Activated naive CD4-positive, alpha-beta T cell treated with anti-CD3 and anti-CD28 coated beads for 36 hours (primary cell): ENCODE measurements at regions of chr19 and their contacts with region 1.

Region 1: DNA sequence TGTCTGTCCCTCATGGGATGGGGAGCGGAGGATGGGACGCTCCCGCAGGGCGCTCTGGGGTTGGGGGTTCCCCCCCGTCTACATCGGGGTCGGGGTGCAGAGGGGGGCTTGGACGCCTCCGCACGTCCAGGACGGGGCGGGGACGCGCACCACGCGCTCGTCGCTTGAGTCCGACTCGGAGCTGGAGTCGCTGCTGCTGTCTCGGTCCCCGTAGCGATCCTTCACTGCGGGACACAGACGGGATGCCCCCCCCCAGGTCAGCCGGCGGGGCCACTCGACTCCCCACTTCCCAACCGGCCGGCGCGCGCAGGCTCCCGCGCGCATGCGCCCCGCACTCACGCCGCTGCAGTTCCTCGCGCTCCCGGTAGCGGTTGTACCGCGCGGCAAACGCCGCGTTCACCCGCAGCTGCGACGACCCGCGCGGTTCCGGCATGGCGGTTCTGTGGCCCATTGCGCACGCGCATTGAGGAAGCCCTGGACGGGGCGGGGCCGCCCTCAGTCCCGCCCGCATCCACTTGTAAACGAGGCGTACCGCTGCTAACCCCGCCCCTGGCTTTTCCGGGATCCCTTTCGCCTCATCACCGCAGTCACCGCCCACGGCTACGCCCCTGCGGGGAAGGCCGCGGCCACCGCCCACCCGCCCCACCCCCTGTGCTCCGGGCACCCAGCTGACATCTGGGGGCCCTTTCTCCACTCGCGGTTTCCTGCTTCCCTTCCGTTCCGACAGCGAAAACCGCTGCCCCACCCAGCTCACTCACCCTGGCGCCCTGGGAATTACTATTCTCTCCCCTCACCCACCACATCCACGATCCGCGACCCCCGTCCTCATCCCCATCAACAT is at the start of gene KRI1:
- DNase-seq: peak; percentile 99
- H3K4me3 Mint-ChIP-seq: peak within 1 kb of the TSS; percentile 94
- H3K27ac Mint-ChIP-seq: peak within 1 kb of the TSS; percentile 98
- H3K4me1 Mint-ChIP-seq: peaks cover 49% of the 10 kb centered on the region
- H3K27me3 Mint-ChIP-seq: no peaks in the 10 kb centered on the region
- total RNA-seq, gene KRI1: 50.2 to 51.7 TPM

Region 2: DNA sequence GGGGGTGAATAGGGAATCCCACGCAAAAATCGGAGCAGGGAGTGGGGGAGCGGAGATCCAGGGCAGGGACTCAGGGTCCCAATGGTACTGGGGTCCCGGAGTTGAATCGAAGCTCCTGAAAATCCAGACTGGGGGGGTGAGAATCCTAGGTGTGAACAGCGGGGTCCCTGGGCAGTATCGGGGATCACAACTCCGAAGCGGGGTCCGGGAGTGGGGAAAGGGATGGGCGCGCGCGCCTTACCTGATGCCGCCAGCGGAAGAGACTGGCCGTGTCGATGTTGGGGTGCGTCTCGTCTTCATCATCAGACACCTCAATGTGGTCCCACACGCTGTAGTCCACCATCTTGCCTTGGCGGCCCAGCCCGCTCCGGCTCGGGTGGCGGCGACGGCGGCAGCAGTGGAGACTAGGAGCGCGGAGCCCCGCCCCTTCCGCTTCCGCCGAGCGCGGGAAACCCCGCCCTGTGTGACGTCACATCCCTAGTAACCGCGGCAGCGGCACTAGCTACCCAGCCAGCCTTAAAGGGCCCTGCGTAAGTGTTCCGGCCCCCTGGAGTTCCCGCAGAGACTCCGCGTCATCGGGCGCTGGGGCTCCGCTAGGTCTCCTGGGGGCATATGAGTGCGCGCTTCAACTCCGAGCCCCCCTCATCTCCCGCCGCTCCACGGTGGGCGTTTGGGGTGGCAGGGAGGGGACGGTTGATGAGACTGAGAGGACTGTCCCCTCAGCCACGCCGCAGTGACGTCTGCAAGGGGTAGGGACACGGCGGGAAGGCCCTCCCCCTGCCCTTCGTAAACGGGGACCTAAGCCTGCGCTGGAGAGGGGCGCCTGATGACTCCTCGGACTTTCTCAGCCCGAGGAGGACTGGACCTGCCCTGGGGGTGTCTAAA is 162.4 kb before region 1 on chr19 and contains the start of gene CDC37:
- CTCF ChIA-PET with region 1: interaction called, 3 read pairs
- intact Hi-C with region 1: loop called (anchors 1 kb)
- DNase-seq: peak; percentile 98
- H3K4me3 Mint-ChIP-seq: peak within 1 kb of the TSS; percentile 91
- H3K27ac Mint-ChIP-seq: peak within 1 kb of the TSS; percentile 77
- H3K4me1 Mint-ChIP-seq: peaks cover 65% of the 10 kb centered on the region
- H3K27me3 Mint-ChIP-seq: no peaks in the 10 kb centered on the region
- total RNA-seq, gene CDC37: 158 to 164 TPM

Region 3: GRCh38 chr19:10543420-10544241 is 22.2 kb before region 1 on chr19 and contains the start of gene ATG4D:
- CTCF ChIA-PET with region 1: interaction called, 28 read pairs
- intact Hi-C with region 1: loop called (anchors 1 kb)
- DNase-seq: peak; percentile 78
- H3K4me3 Mint-ChIP-seq: peak within 1 kb of the TSS; percentile 85
- H3K27ac Mint-ChIP-seq: peak within 1 kb of the TSS; percentile 84
- H3K4me1 Mint-ChIP-seq: peaks cover 16% of the 10 kb centered on the region
- H3K27me3 Mint-ChIP-seq: peaks cover 5% of the 10 kb centered on the region
- total RNA-seq, gene ATG4D: 21.6 to 22.5 TPM

Region 4: DNA sequence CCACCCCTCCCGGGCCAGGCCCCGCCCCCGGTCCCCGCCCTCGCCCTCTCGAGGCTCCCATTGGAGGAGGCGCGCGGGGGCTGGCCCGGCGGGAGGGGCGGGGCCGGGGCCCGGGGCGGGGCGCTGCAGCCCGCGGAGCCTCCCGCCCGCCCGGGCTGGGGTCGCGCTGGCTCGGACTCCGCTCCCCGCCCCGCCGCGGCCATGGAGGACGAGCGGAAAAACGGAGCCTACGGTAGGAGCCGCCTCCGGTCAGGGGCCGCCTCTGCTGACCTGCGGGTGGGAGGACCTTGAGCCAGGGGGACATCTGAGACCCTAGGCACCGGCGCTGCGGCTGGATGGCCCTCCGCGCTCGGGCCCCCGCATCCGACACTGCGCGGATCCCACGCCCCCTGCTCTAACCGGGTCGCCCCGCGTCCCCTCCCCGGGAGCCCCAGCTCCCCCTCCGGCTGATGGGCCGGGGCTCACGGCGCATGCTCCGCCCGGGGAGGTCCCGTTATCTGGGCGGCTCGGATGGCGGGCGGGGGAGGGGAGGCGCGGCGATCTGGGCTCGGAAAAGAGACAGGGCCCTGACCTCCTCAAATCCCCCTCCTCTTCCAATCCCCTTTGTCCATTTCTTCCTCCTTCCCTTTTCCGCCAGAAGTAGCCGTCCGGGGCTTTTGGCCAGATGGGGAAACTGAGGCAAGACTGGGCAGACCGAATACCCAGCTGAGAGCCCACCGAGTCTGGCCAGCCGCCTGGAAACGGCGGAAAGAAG is 36.7 kb after region 1 on chr19:
- CTCF ChIA-PET with region 1: no interaction called
- intact Hi-C with region 1: loop called (anchors 1 kb)
- DNase-seq: peak; percentile 91
- H3K4me3 Mint-ChIP-seq: peak overlapping the region; percentile 98
- H3K27ac Mint-ChIP-seq: peak overlapping the region; percentile 100
- H3K4me1 Mint-ChIP-seq: peaks cover 24% of the 10 kb centered on the region
- H3K27me3 Mint-ChIP-seq: no peaks in the 10 kb centered on the region

Region 5: GRCh38 chr19:10835754-10836477 is 270.1 kb after region 1 on chr19 and contains the start of gene TMED1:
- CTCF ChIA-PET with region 1: no interaction called
- intact Hi-C with region 1: loop called (anchors 2 kb)
- DNase-seq: peak; percentile 98
- H3K4me3 Mint-ChIP-seq: peak within 1 kb of the TSS; percentile 94
- H3K27ac Mint-ChIP-seq: peak within 1 kb of the TSS; percentile 97
- H3K4me1 Mint-ChIP-seq: peaks cover 14% of the 10 kb centered on the region
- H3K27me3 Mint-ChIP-seq: no peaks in the 10 kb centered on the region
- total RNA-seq, gene TMED1: 15.3 to 16.7 TPM

Region 6: GRCh38 chr19:11090054-11090900 is 524.5 kb after region 1 on chr19:
- CTCF ChIA-PET with region 1: no interaction called
- intact Hi-C with region 1: loop called (anchors 2 kb)
- DNase-seq: peak; percentile 99
- H3K4me3 Mint-ChIP-seq: peak overlapping the region; percentile 94
- H3K27ac Mint-ChIP-seq: peak overlapping the region; percentile 99
- H3K4me1 Mint-ChIP-seq: peaks cover 48% of the 10 kb centered on the region
- H3K27me3 Mint-ChIP-seq: no peaks in the 10 kb centered on the region